Activated T-helper 1 cell treated with anti-CD3 and anti-CD28 coated beads, Interleukin-12 subunit alpha, Interleukin-12 subunit beta, Interleukin-2, Interleukin-4 antibody, amounts not matched to agents 30 ng/mL and 10 ng/mL and 1 ng/mL, durations not matched to agents 14 hours and 24 hours and 36 hours (primary cell): ENCODE measurements at regions of chr7 and their contacts with region 1.

Region 1: GRCh38 chr7:45136106-45137060 is 21.2 kb upstream of the RAMP3 start:
- DNase-seq: peak; percentile 55
- H3K4me3 Mint-ChIP-seq: no peak overlapping the region
- H3K27ac Mint-ChIP-seq: no peak overlapping the region
- H3K4me1 Mint-ChIP-seq: peaks cover 19% of the 10 kb centered on the region
- H3K27me3 Mint-ChIP-seq: peaks cover 10% of the 10 kb centered on the region

Region 2: DNA sequence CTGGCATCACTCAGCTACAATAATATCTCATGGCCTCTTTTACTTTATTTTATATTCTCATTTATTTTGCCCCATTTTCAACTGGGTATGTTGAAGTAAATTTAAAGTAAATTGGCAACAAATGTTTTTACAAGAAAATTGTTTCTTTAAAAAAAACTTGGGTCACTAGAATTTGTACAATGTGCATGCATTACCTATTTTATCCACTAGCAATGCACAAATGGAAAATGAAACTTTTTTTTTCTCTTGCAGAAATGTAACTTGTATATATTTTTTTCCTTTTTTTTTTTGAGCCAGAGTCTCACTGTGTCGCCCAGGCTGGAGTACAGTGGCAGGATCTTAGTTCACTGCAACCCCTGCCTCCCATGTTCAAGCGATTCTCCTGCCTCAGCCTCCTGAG is 278.2 kb before region 1 on chr7:
- intact Hi-C with region 1: loop called (anchors 1 kb)
- DNase-seq: no peak
- H3K4me3 Mint-ChIP-seq: no peak overlapping the region
- H3K27ac Mint-ChIP-seq: no peak overlapping the region
- H3K4me1 Mint-ChIP-seq: peaks cover 17% of the 10 kb centered on the region
- H3K27me3 Mint-ChIP-seq: peaks cover 2% of the 10 kb centered on the region

Region 3: GRCh38 chr7:44973610-44974401 is 162.6 kb before region 1 on chr7:
- intact Hi-C with region 1: loop called (anchors 1 kb)
- DNase-seq: peak; percentile 41
- H3K4me3 Mint-ChIP-seq: peak overlapping the region; percentile 73
- H3K27ac Mint-ChIP-seq: no peak overlapping the region
- H3K4me1 Mint-ChIP-seq: peaks cover 29% of the 10 kb centered on the region
- H3K27me3 Mint-ChIP-seq: no peaks in the 10 kb centered on the region

Region 4: GRCh38 chr7:44999245-45000095 is 136.9 kb before region 1 on chr7:
- intact Hi-C with region 1: loop called (anchors 1 kb)
- DNase-seq: peak; percentile 99
- H3K4me3 Mint-ChIP-seq: peak overlapping the region; percentile 88
- H3K27ac Mint-ChIP-seq: peak overlapping the region; percentile 91
- H3K4me1 Mint-ChIP-seq: peaks cover 58% of the 10 kb centered on the region
- H3K27me3 Mint-ChIP-seq: no peaks in the 10 kb centered on the region

Region 5: DNA sequence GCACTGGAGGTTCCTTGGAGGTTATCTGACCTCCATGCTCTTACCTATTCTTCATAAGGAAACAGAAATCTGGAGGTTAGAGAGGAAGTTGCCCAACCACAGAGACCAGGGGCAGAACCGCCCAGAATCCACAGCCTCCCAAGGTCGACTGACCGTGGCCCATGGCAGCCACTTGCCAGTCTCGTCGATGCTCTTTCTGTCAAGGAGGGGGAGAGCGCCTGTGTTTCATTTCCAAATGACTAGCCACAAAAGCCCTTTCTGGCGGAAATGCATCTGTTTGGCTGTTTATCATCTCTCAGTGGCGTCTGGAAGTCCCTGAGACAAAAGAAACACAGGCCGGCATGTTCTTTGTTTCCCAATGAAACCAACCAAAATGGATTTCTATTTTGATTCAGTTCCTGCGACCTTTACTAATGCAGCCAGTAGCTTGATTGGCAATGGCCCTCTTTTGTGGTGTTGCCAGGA is 24.1 kb after region 1 on chr7:
- intact Hi-C with region 1: no loop called
- DNase-seq: no peak
- H3K4me3 Mint-ChIP-seq: no peak overlapping the region
- H3K27ac Mint-ChIP-seq: no peak overlapping the region
- H3K4me1 Mint-ChIP-seq: peaks cover 8% of the 10 kb centered on the region
- H3K27me3 Mint-ChIP-seq: peaks cover 20% of the 10 kb centered on the region